ENCODE measurements at regions of chr4 and their contacts with region 1.

Region 1: GRCh38 chr4:118981839-118982381 is 93.3 kb downstream of the SYNPO2 start:
- DNase-seq: peak in 6 of 10 donors; percentile 35 to 86 (median 54)

Region 2: GRCh38 chr4:119286377-119287002 is 304.6 kb after region 1 on chr4:
- intact Hi-C with region 1: loop called (anchors 2 kb)
- DNase-seq: no peak

Region 3: GRCh38 chr4:119493419-119493818 is 511.5 kb after region 1 on chr4:
- intact Hi-C with region 1: loop called (anchors 2 kb)
- DNase-seq: no peak

Region 4: GRCh38 chr4:120049732-120050494 is 1068.0 kb after region 1 on chr4:
- intact Hi-C with region 1: loop called (anchors 10 kb)
- DNase-seq: peak in 9 of 10 donors; percentile 51 to 94 (median 77)